Naive thymus-derived CD8-positive, alpha-beta T cell (primary cell): ENCODE measurements at regions of chr10 and their contacts with region 1.

Region 1: DNA sequence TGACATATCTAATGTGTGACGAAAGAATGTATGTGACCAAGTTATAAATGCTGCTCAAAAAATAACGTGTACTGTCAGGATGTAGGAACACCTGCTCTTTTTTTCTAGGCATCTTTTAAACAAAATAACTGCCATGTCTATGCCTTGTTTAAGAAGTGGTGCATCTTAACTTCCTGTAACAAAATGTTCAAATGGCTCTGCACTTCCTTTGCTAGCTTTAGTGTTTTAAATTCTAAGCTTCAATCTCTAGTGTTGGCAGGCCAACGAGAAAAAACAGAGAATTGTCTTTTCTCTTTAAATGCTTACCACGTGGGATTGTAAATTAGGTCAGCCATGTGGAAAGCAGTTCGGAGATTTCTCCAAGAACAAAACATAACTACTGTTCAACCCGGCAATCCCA is 14.6 kb upstream of the PDSS1 start:
- DNase-seq: peak in 6 of 10 donors; percentile 12 to 87 (median 66)
- ATAC-seq: peak; percentile 89 to 94
- H3K4me3 Mint-ChIP-seq: peak overlapping the region; percentile 6 to 80 (median 65)
- H3K27ac Mint-ChIP-seq: peak overlapping the region; percentile 93 to 100 (median 97)
- H3K4me1 Mint-ChIP-seq: peaks cover 14 to 40% (median 38%) of the 10 kb centered on the region in 4 donors
- H3K27me3 Mint-ChIP-seq: no peaks in the 10 kb centered on the region

Region 2: DNA sequence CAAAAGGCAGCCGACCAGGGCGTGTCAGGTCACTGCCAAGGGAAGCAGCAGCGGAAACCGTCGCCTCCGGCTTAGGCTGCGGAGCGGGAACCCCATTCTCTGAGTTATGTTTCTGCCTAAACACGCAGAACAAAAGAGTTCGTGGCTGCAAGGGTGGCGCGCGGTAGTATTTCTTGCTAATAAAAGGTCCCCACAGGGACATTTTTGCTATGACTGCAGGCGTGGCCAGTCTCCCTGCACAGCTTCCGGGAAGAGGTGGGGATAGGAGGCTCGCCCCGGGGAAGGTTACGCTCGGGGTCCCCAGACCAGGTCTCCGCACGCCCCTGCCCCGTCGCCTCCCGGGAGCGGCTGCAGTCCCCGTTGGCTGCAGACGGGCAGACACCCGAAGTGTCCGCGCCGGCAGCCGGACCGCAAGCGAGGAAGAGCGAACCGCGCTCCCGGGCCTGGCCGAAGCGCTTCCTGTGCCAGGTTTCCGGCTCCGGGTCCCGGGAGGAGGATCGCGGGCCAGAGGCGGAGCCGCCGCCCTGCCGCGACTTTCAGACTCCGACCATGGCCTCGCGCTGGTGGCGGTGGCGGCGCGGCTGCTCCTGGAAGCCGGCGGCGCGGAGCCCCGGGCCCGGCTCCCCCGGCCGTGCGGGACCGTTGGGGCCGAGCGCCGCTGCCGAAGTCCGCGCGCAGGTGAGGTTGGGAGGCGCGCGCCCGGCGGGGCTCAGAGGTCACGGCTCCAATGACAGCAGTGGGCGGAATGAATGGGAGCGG is 14.4 kb after region 1 on chr10 and contains the start of gene PDSS1:
- POLR2A ChIA-PET with region 1: interaction called, 16 read pairs
- DNase-seq: peak; percentile 31 to 75 (median 52)
- ATAC-seq: peak; percentile 72 to 84
- H3K4me3 Mint-ChIP-seq: peak within 1 kb of the TSS; percentile 92 to 98 (median 94)
- H3K27ac Mint-ChIP-seq: peak within 1 kb of the TSS; percentile 94 to 99 (median 97)
- H3K4me1 Mint-ChIP-seq: peaks cover 17 to 41% (median 39%) of the 10 kb centered on the region in 4 donors
- H3K27me3 Mint-ChIP-seq: no peaks in the 10 kb centered on the region
- polyA plus RNA-seq, gene PDSS1: 2.9 to 3.9 (median 3.8) TPM

Region 3: DNA sequence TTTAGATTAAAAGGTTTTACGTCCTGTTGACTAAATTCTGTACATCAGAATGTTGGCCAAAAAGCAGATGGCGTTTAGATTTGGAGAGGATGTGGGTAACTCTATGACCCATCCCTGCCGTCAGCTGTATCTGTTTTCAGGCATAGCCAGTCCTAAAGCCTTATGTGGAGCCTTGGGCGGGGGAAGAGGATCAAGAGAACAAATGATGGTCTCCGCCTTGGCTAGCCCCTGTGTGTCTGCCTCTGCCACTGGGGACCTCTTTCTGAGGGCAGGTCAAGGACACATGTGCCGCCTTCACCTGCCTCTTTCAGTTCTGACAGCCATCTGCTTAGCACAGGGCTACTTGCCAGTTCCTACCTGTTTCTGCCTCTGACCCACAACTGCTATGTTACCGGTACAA is 38.6 kb after region 1 on chr10:
- POLR2A ChIA-PET with region 1: no interaction called
- DNase-seq: peak in 5 of 10 donors; percentile 13 to 24 (median 21)
- ATAC-seq: peak in 1 of 2 donors; percentile 70
- H3K4me3 Mint-ChIP-seq: peak overlapping the region in 2 of 10 donors; percentile 20 to 24
- H3K27ac Mint-ChIP-seq: peak overlapping the region in 9 of 10 donors; percentile 58 to 91 (median 77)
- H3K4me1 Mint-ChIP-seq: peaks cover 4 to 13% (median 9%) of the 10 kb centered on the region in 4 donors
- H3K27me3 Mint-ChIP-seq: no peaks in the 10 kb centered on the region